ENCODE measurements at regions of chr17 and their contacts with region 1.

Region 1: DNA sequence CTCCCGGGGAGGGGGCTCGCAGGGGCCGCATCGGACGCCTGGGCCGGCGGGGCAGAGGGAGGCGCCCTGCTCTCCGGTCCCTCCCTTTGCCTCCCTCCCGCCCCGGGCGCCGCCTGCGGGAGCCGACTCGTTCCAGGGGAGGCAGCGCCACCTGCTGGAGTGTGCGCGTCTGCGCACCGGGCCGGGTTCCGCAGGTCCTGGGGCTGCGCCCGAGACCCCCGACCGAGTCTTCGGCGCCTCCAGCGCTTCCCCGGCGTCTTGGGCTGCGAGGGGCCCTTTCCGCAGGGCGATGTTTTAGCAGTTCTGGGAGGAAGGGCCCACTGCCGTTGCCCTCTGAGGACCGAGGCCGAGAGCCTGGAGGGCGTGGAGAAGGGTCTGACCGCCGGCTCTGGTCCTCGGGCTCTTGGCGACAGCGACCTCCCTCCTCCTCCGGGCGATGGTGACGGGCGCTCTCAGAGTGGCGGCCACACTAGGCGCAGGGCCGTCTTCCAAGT is 106.3 kb downstream of the SEC14L1 start:
- DNase-seq: peak; percentile 82 to 92
- ATAC-seq: peak; percentile 91 to 100 (median 100)
- H3K4me3 ChIP-seq: peak overlapping the region; percentile 25
- H3K4me3 Mint-ChIP-seq: peak overlapping the region; percentile 40
- H3K27ac ChIP-seq: no peak overlapping the region
- H3K27ac Mint-ChIP-seq: peak overlapping the region in 1 of 2 donors; percentile 53
- H3K4me1 ChIP-seq: peaks cover 12% of the 10 kb centered on the region
- H3K4me1 Mint-ChIP-seq: peaks cover 0 to 16% of the 10 kb centered on the region in 2 donors
- H3K27me3 ChIP-seq: no peaks in the 10 kb centered on the region
- H3K27me3 Mint-ChIP-seq: peaks cover 14 to 16% of the 10 kb centered on the region in 2 donors
- CTCF ChIP-seq: peak; percentile 99

Region 2: DNA sequence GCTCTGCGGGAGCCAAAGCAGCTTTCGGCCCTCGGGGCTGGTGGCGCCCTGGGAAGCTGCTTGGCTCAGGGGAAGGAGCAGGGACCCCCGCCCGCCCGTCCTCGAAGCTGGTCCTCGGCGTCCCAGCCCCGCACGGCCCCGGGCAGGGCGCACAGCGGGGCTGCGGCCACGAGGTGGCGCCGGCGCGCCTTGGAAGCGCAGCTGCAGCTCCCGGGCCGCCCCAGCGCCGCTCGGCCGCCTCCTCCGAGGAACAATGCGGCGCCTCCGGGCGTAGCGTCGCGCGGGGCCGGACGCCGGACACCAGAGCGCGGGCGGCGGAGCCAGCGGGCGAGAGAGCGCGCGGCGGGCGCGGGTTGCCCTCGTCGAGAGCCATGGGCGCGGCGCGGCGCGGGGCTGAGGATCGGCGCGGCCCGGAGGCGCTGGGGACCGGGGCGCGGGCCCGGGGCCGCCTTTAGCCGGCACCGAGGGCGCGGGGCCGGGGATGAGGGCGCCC is 378.9 kb before region 1 on chr17 and contains the start of gene MGAT5B:
- intact Hi-C with region 1: loop called (anchors 5 kb)
- DNase-seq: peak; percentile 76 to 91
- ATAC-seq: peak; percentile 94 to 97 (median 96)
- H3K4me3 ChIP-seq: no peak within 1 kb of the TSS
- H3K4me3 Mint-ChIP-seq: peak within 1 kb of the TSS; percentile 87
- H3K27ac ChIP-seq: no peak within 1 kb of the TSS
- H3K27ac Mint-ChIP-seq: no peak within 1 kb of the TSS
- H3K4me1 ChIP-seq: peaks cover 11% of the 10 kb centered on the region
- H3K4me1 Mint-ChIP-seq: peaks cover 0 to 15% of the 10 kb centered on the region in 2 donors
- H3K27me3 ChIP-seq: peaks cover 23% of the 10 kb centered on the region
- H3K27me3 Mint-ChIP-seq: peaks cover 29 to 31% of the 10 kb centered on the region in 2 donors
- CTCF ChIP-seq: peak; percentile 74
- total RNA-seq, gene MGAT5B: not detected

Region 3: DNA sequence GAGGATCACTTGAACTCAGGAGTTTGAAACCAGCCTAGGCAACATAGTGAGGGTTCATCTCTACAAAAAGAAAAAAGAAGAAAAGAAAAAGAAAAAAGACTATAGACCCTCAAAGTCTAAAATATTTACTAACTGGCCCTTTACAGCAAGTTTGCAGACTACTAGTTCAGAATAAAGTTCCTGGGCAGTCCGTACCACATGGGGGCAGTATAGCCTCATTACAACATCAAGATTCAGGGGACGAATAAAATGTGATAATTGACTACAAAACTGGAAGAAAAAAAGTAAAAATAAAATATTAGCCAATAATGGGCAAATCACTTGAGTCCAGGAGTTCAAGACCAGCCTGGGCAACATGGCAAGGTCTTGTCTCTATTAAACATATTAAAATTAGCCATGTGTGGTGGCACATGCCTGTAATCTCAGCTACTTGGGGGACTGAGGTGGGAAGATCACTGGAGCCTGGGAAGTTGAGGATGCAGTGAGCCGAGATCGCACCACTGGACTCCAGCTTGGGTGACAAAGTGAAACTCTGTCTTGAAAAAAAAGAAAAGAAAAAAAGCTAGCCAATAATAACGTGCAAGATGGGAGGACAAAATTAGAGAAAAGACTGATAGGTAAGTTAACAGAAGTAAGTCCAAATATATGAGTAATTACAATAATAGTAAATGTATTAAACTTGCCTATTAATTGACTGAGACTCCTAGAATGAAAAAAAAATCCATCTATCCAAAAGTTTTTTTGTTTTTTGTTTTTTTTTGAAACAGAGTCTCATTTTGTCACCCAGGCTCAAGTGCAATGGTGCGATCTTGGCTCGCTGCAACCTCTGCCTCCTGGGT is 235.7 kb before region 1 on chr17:
- intact Hi-C with region 1: loop called (anchors 1 kb)
- DNase-seq: peak; percentile 24 to 77
- ATAC-seq: peak in 2 of 3 donors; percentile 53 to 56
- H3K4me3 ChIP-seq: no peak overlapping the region
- H3K4me3 Mint-ChIP-seq: no peak overlapping the region
- H3K27ac ChIP-seq: no peak overlapping the region
- H3K27ac Mint-ChIP-seq: no peak overlapping the region
- H3K4me1 ChIP-seq: no peaks in the 10 kb centered on the region
- H3K4me1 Mint-ChIP-seq: no peaks in the 10 kb centered on the region
- H3K27me3 ChIP-seq: no peaks in the 10 kb centered on the region
- H3K27me3 Mint-ChIP-seq: peaks cover 0 to 10% of the 10 kb centered on the region in 2 donors
- CTCF ChIP-seq: peak; percentile 66

Region 4: GRCh38 chr17:77088455-77089123 is 158.5 kb before region 1 on chr17:
- intact Hi-C with region 1: loop called (anchors 1 kb)
- DNase-seq: peak; percentile 85 to 94
- ATAC-seq: peak; percentile 90 to 96 (median 95)
- H3K4me3 ChIP-seq: peak overlapping the region; percentile 83
- H3K4me3 Mint-ChIP-seq: peak overlapping the region; percentile 91
- H3K27ac ChIP-seq: peak overlapping the region; percentile 88
- H3K27ac Mint-ChIP-seq: peak overlapping the region; percentile 96 to 99
- H3K4me1 ChIP-seq: peaks cover 38% of the 10 kb centered on the region
- H3K4me1 Mint-ChIP-seq: peaks cover 32 to 38% of the 10 kb centered on the region in 2 donors
- H3K27me3 ChIP-seq: no peaks in the 10 kb centered on the region
- H3K27me3 Mint-ChIP-seq: peaks cover 0 to 8% of the 10 kb centered on the region in 2 donors
- CTCF ChIP-seq: peak; percentile 75